Activated CD4-positive, alpha-beta T cell treated with anti-CD3 and anti-CD28 coated beads for 36 hours (primary cell): ENCODE measurements at regions of chr22 and their contacts with region 1.

Region 1: GRCh38 chr22:22787786-22788459 is 99.7 kb upstream of the IGLL5 start:
- DNase-seq: peak; percentile 83
- ATAC-seq: peak; percentile 88
- H3K4me3 Mint-ChIP-seq: no peak overlapping the region
- H3K27ac Mint-ChIP-seq: no peak overlapping the region
- H3K4me1 Mint-ChIP-seq: peaks cover 44% of the 10 kb centered on the region
- H3K27me3 Mint-ChIP-seq: no peaks in the 10 kb centered on the region

Region 2: DNA sequence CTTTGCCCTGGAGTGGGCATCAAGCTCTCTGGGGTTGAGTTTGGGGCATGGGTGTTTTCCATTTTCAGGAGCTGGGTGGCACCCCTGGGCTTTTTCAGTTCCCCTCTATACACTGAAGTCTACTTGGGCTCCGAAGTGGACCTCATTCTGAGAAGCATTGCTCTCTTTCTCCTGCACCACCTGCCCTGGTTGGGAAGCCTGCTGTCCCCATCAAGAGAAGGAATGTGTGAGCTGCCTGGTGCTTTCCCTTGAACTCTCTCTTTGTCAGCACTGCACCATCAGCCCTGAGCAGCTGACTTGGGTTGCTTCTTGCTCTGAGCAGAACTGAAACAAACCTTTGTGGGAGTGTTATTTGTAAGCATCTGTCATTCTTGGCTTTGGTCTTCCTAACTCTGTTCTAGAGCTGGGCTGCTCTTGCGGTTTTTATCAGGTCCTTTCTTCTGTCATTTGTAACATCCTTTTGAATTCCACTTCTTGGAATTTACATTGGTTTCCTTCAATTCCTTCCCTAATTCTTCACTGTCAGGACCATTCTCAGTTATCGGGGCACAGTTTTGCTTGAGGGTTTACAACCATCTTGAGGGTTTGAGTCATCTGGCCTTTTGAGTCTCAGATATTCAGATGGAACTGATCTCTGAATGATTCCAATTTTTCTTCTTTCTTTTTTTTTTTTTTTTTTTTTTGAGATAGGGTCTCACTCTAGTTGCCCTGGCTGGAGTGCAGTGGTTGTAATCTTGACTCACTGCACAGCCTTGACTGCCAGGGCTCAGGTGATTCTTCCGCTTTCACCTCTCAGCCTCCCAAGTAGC is 1199.9 kb before region 1 on chr22:
- CTCF ChIA-PET with region 1: no interaction called
- POLR2A ChIA-PET with region 1: no interaction called
- intact Hi-C with region 1: no loop called
- DNase-seq: peak; percentile 79
- ATAC-seq: peak; percentile 97
- H3K4me3 Mint-ChIP-seq: peak overlapping the region; percentile 12
- H3K27ac Mint-ChIP-seq: peak overlapping the region; percentile 88
- H3K4me1 Mint-ChIP-seq: peaks cover 69% of the 10 kb centered on the region
- H3K27me3 Mint-ChIP-seq: no peaks in the 10 kb centered on the region

Region 3: GRCh38 chr22:22226448-22227187 is 561.3 kb before region 1 on chr22:
- CTCF ChIA-PET with region 1: no interaction called
- POLR2A ChIA-PET with region 1: no interaction called
- intact Hi-C with region 1: no loop called
- DNase-seq: no peak
- ATAC-seq: no peak
- H3K4me3 Mint-ChIP-seq: no peak overlapping the region
- H3K27ac Mint-ChIP-seq: no peak overlapping the region
- H3K4me1 Mint-ChIP-seq: no peaks in the 10 kb centered on the region
- H3K27me3 Mint-ChIP-seq: peaks cover 2% of the 10 kb centered on the region

Region 4: DNA sequence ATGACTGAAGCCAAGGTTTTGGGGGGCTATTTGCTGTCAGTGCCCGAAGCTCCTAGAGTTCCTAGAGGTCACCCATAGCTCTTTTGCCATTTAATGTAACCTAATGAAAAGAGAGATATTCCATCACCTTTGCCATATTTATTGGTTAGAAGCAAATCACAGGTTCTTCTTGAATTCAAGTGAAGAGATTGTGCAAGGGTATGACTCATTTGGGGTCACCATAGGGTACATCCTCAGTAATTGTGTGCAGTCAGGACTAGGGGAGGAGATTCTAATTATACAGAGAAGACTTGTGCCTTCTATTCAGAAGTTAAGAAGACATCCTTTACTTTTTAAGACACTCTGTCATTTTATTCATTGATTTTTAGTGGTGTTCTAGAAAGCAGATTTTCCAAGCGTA is 221.9 kb before region 1 on chr22:
- CTCF ChIA-PET with region 1: no interaction called
- POLR2A ChIA-PET with region 1: no interaction called
- intact Hi-C with region 1: no loop called
- DNase-seq: no peak
- ATAC-seq: no peak
- H3K4me3 Mint-ChIP-seq: no peak overlapping the region
- H3K27ac Mint-ChIP-seq: no peak overlapping the region
- H3K4me1 Mint-ChIP-seq: no peaks in the 10 kb centered on the region
- H3K27me3 Mint-ChIP-seq: peaks cover 24% of the 10 kb centered on the region

Region 5: GRCh38 chr22:22720724-22721261 is 67.1 kb before region 1 on chr22:
- CTCF ChIA-PET with region 1: no interaction called
- POLR2A ChIA-PET with region 1: no interaction called
- intact Hi-C with region 1: no loop called
- DNase-seq: no peak
- ATAC-seq: peak; percentile 25
- H3K4me3 Mint-ChIP-seq: no peak overlapping the region
- H3K27ac Mint-ChIP-seq: no peak overlapping the region
- H3K4me1 Mint-ChIP-seq: peaks cover 28% of the 10 kb centered on the region
- H3K27me3 Mint-ChIP-seq: no peaks in the 10 kb centered on the region

Region 6: GRCh38 chr22:22802339-22802970 is 14.5 kb after region 1 on chr22:
- CTCF ChIA-PET with region 1: interaction called, 10 read pairs
- POLR2A ChIA-PET with region 1: no interaction called
- intact Hi-C with region 1: no loop called
- DNase-seq: peak; percentile 70
- ATAC-seq: peak; percentile 68
- H3K4me3 Mint-ChIP-seq: no peak overlapping the region
- H3K27ac Mint-ChIP-seq: no peak overlapping the region
- H3K4me1 Mint-ChIP-seq: peaks cover 38% of the 10 kb centered on the region
- H3K27me3 Mint-ChIP-seq: no peaks in the 10 kb centered on the region

Region 7: GRCh38 chr22:22877523-22878210 is 89.7 kb after region 1 on chr22:
- CTCF ChIA-PET with region 1: interaction called, 30 read pairs
- POLR2A ChIA-PET with region 1: no interaction called
- intact Hi-C with region 1: loop called (anchors 1 to 5 kb)
- DNase-seq: peak; percentile 86
- ATAC-seq: peak; percentile 54
- H3K4me3 Mint-ChIP-seq: no peak overlapping the region
- H3K27ac Mint-ChIP-seq: no peak overlapping the region
- H3K4me1 Mint-ChIP-seq: no peaks in the 10 kb centered on the region
- H3K27me3 Mint-ChIP-seq: no peaks in the 10 kb centered on the region

Region 8: GRCh38 chr22:23128269-23129108 is 340.6 kb after region 1 on chr22:
- CTCF ChIA-PET with region 1: no interaction called
- POLR2A ChIA-PET with region 1: no interaction called
- intact Hi-C with region 1: loop called in 1 of 2 experiments (anchors 1 kb)
- DNase-seq: peak; percentile 84
- ATAC-seq: peak; percentile 92
- H3K4me3 Mint-ChIP-seq: no peak overlapping the region
- H3K27ac Mint-ChIP-seq: no peak overlapping the region
- H3K4me1 Mint-ChIP-seq: no peaks in the 10 kb centered on the region
- H3K27me3 Mint-ChIP-seq: no peaks in the 10 kb centered on the region